Ovary (tissue), 10 donors: ENCODE measurements at regions of chr20 and their contacts with region 1.

Region 1: DNA sequence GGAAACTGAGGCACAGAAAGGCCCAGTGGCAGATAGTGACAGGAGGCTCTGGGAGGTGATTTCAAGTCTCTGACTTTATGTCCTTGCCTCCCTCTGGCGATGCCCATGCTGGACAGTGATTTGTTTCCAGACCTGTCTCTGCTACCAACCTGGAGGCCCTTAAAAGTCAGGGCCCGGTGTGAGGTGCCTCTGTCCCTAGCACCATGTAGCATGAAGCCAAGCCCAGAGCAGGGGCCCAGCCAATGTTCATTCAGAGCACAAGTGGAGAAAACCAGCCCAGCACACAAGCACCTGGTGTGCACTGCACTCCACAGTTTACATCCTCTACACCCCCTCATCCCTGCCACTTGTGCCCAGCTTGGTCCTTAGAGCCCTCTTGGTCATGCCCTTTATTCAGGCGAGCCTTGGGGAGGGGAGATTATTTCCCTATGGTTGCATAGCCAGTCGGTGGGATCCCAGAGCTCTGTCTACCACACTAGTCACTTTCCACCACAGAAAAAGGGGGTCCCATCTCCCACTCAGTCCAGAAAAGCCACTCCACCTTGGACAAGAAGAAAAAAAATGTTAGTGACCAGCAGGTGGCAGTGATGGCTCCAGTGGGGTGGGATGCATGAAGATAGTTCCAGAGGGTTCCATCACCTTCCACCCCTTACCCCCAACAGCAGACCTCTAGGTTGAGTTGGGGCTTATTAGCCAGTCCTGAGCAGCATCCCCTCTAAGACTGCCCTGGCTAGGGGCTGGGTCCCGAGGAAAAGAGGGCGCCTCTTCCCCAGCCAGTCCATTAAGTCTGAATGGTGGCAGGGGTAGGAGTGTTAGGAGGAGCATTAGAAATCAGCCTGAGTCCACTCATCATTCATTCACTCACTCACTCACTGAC is 30.9 kb downstream of the KIAA1755 start:
- DNase-seq: peak in 2 of 5 donors; percentile 2 to 34
- H3K4me3 ChIP-seq: no peak overlapping the region
- H3K27ac ChIP-seq: no peak overlapping the region
- H3K4me1 ChIP-seq: no peaks in the 10 kb centered on the region
- H3K27me3 ChIP-seq: no peaks in the 10 kb centered on the region
- CTCF ChIP-seq: peak in 2 of 3 donors; percentile 27 to 37
- EP300 ChIP-seq: no peak
- POLR2A ChIP-seq: no peak

Region 2: GRCh38 chr20:38304845-38305447 is 75.3 kb after region 1 on chr20:
- intact Hi-C with region 1: loop called in 2 of 4 experiments (anchors 5 to 10 kb)
- DNase-seq: peak in 1 of 5 donors; percentile 49
- H3K4me3 ChIP-seq: no peak overlapping the region
- H3K27ac ChIP-seq: no peak overlapping the region
- H3K4me1 ChIP-seq: peaks cover under 1% of the 10 kb centered on the region
- H3K27me3 ChIP-seq: no peaks in the 10 kb centered on the region
- CTCF ChIP-seq: no peak
- EP300 ChIP-seq: no peak
- POLR2A ChIP-seq: no peak

Region 3: DNA sequence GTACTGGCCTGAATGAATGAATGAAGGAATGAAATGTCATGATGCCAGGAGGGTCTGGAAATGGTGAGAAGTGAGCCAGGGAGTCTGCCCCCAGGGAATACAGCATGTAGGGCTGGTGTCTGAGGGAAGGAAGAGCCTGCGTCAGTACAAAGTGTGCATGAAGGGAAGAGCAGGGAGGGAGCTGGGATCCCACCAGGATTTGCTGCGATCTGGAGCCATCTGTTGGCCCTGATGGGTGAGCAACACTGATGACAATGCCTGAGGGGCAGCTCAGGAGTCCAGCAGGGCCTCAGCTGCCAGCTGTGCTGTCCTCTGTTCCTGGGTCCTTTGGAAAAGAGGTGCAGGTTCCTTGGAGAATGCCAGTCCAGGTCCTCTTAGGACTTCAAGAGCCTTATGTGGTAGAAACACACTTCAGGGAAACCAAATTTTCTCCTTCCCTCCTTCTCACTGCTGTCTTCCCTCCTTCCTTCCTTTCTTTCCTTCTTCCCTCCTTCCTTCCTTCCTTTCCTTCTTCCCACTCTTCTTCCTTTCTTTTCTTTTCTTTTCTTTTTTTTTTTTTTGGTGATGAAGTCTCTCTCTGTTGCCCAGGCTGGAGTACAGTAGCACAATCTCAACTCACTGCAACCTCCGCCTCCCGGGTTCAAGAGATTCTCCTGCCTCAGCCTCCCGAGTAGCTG is 85.8 kb after region 1 on chr20:
- intact Hi-C with region 1: loop called (anchors 5 to 10 kb)
- DNase-seq: peak in 4 of 5 donors; percentile 30 to 50 (median 41)
- H3K4me3 ChIP-seq: no peak overlapping the region
- H3K27ac ChIP-seq: no peak overlapping the region
- H3K4me1 ChIP-seq: no peaks in the 10 kb centered on the region
- H3K27me3 ChIP-seq: no peaks in the 10 kb centered on the region
- CTCF ChIP-seq: peak in 1 of 3 donors; percentile 26
- EP300 ChIP-seq: no peak
- POLR2A ChIP-seq: no peak

Region 4: DNA sequence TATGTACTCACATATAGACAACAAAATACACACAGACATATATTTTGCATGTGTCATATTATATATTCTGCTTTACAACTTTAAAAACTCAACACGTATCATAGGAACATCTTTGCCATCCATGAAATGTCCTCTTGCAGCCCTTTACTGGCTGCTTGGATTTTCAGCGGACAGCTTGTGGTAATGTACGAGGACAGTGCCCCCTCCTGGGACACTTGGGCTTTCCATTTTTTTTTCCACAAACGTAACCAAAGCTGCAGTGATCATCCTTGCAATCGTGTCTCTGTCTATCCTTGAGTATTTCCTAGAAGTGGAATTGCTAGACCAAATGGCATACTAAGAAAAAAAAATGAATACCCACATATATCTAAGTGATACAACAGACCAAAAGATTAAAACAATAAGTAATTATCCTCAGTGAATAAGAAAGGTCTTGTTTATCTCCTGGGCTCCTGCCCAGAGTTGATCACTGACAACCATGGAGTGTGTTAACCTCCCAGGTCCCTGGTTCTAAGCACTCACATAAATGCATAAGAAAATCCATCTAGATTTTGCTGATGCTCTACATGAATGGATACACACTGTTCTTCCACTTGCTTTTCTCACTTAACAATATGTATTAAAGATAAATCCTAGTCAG is 92.5 kb after region 1 on chr20:
- intact Hi-C with region 1: loop called (anchors 5 to 10 kb)
- DNase-seq: peak; percentile 41 to 70 (median 56)
- H3K4me3 ChIP-seq: no peak overlapping the region
- H3K27ac ChIP-seq: no peak overlapping the region
- H3K4me1 ChIP-seq: no peaks in the 10 kb centered on the region
- H3K27me3 ChIP-seq: no peaks in the 10 kb centered on the region
- CTCF ChIP-seq: peak; percentile 30 to 75 (median 70)
- EP300 ChIP-seq: no peak
- POLR2A ChIP-seq: no peak